GM10248 (cell line): ENCODE measurements at regions of chr1 and their contacts with region 1.

Region 1: DNA sequence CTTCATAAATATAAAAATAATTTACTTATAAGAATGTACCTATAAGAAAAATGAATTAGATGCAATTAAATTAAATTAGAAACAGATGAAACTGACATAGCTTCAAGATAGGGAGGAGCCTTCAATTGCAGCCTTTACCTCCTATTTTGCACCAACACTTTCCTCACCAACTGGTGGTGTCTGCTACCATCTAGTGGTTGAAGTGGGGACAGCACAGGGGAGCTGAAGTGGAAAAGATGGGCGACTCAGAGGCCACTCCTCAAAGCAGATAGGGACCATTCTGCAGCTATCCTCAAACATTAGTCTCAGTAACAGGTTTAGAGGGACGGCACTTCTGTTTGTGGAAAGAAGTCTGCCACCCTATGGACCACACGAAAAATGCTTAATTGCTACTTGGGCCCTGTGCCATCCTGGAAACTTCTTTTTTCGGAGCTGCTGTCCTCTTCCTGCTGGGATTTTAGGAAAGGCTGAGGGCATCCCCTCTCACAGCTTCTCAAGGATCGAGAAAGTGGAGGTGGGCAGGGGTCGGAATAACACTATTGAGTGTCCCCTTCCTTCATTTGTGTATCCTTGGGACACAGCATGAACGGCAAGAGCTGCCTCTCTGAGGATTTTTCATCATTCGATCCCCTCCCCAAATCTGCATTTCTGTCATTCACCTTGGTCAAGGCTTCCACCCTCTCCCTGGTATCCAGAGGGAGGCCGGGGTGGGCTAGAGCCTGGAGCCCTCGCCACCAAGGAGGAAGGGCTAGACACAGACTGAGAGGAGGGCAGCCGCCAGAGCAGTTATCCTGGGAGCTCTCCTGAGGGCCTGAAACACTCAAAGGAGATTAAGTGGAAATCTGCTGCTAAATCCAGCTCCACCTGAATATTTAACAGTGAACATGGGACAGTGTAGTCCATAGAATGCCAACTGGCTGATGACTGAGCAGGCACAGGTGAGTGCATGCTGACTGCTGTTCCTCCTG is 9.6 kb downstream of the PROK1 start:
- DNase-seq: peak; percentile 82
- CTCF ChIP-seq: peak; percentile 97

Region 2: GRCh38 chr1:110312188-110313121 is 148.1 kb before region 1 on chr1:
- CTCF ChIA-PET with region 1: interaction called, 22 read pairs
- POLR2A ChIA-PET with region 1: no interaction called
- DNase-seq: peak; percentile 71
- CTCF ChIP-seq: peak; percentile 91

Region 3: DNA sequence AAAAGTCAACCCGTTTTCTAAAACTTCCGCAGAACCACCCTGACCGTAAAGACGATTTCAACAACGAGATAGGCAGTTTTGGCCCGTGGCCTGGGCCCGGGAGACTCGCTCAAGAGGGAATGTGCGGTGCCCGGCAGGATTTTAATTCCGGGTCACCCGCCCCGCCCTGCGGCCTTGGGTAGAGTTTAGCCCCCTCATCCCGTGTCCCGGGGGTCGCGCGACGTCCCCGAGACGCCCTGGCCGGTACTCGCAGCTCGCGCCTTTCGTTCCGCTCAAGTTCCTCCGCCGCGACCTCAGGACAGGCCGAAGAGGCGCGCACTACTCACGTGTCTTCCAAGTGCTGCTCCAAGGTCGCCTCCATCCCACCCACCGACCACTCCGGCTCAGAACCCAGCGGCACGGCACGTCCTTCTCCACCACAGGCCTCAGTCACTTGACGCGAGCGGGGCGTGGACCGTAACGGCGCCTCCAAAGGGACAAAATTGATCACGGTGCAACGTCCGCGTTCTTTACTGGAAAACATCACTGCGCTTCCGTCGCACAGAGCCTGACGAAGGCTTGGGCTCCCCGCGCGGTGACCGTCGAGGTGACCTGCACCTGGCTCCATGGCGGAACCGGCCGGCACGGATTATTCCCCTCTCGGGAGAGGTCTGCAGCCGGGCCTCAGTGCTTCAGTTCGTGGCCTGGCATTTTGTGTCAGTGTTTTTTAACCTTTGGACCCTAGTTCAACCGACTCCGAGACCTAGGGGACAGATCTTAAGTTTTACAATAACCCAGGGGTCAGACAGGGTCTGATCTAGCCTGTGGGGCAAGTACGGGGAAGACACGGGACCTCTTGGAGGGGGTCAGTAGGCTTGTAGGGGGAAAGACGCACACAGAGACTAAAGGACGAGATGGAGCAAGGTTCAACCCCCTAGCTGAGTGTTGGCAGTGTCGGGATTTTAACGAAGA is 53.0 kb before region 1 on chr1 and contains the start of gene LAMTOR5:
- CTCF ChIA-PET with region 1: interaction called, 135 read pairs
- POLR2A ChIA-PET with region 1: no interaction called
- DNase-seq: peak; percentile 91
- CTCF ChIP-seq: no peak

Region 4: DNA sequence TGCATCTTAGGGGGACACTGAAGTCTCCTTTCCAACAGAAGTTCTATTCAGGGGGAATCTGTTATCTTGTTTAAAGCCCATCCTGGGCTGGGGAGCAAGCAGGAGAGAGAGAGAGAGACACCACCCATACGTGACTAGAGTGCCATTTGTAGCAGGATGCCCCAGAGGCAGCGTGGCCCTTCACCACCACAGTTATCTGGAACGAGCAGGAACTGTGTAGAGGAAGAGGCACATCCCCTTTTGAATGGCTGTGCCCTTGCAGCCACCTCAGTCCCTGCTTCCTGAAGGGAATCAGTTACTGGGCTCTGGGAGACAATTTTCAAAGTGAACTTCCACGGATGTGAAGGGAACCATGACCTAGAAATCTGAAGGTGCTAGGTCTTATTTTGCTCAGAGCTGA is 33.7 kb before region 1 on chr1:
- CTCF ChIA-PET with region 1: interaction called, 17 read pairs
- POLR2A ChIA-PET with region 1: no interaction called
- DNase-seq: no peak
- CTCF ChIP-seq: no peak

Region 5: DNA sequence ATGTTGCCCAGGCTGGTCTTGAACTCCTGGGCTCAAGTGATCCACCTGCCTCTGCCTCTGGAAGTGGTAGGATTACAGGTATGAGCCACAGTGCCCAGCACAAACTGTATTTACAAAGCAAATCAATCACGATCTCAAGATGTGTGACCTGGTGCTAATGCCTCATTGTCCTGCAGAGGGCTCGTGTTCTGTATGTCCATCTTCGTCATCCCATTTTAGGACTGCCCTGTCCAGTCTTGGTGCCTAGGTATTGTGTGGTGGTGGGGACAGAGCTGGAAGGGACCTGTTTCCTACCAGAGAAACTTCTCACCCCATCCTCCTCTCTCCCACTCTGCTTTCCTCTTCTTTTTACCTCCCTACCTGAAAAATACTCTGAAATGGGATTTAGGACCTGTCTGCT is 10.6 kb after region 1 on chr1:
- CTCF ChIA-PET with region 1: interaction called, 18 read pairs
- POLR2A ChIA-PET with region 1: no interaction called
- DNase-seq: no peak
- CTCF ChIP-seq: no peak